Gastrocnemius medialis (tissue), 4 donors: ENCODE measurements at regions of chr11 and their contacts with region 1.

Region 1: GRCh38 chr11:3723014-3723708 is 52.0 kb upstream of the CHRNA10 start:
- DNase-seq: no peak
- ATAC-seq: peak; percentile 50 to 89
- H3K4me3 ChIP-seq: no peak overlapping the region
- H3K27ac ChIP-seq: peak overlapping the region; percentile 32 to 45 (median 40)
- H3K4me1 ChIP-seq: no peaks in the 10 kb centered on the region
- H3K27me3 ChIP-seq: no peaks in the 10 kb centered on the region
- CTCF ChIP-seq: no peak
- POLR2A ChIP-seq: no peak

Region 2: GRCh38 chr11:3764266-3764665 is 41.1 kb after region 1 on chr11:
- in situ Hi-C with region 1: no loop called
- intact Hi-C with region 1: loop called (anchors 5 kb)
- DNase-seq: no peak
- ATAC-seq: no peak
- H3K4me3 ChIP-seq: no peak overlapping the region
- H3K27ac ChIP-seq: no peak overlapping the region
- H3K4me1 ChIP-seq: no peaks in the 10 kb centered on the region
- H3K27me3 ChIP-seq: no peaks in the 10 kb centered on the region
- CTCF ChIP-seq: no peak
- POLR2A ChIP-seq: no peak